Activated naive CD4-positive, alpha-beta T cell treated with anti-CD3 and anti-CD28 coated beads, Interleukin-2, amount 10 ng/mL, durations not matched to agents 7 days and 5 days (primary cell): ENCODE measurements at regions of chr17 and their contacts with region 1.

Region 1: DNA sequence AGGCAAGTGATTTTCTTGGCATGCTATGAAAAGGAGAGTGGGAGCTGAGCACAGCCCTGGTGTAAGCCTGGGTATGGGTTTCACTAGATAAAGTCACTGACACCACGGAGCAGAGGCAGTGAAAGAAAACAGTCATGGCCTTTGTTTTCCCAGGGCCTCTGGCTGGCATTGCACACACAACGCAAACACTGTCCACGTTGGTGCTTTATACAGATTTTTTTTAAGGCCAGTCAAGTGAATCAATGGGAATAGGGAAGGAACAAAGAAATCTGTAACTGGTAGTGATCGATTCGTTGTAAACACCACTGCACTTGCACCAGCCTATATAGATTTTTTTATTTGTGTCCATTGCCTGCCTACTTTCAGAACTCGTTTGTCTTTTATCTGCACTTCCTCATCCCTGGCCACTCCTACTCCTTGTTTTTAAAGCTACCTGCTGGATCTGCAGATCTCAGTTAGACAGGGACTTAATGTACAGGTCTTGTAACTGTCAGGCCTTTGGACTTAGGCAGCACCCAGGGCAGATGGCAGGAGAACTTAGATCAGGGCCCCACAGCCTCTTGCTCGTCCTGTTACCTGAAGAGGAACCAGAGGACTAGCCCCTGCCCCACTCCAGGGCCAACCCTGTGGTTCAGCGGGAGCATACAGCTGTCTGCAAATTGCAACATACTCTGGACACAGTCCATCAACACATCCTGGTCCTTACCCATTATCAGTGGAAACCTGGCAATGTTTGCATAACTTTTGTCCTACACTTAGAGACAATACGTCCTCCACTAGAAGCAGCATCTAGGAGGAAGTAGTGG is 10.6 kb upstream of the TMIGD1 start:
- DNase-seq: no peak
- H3K4me3 Mint-ChIP-seq: no peak overlapping the region
- H3K27ac Mint-ChIP-seq: no peak overlapping the region
- H3K4me1 Mint-ChIP-seq: peaks cover 5% of the 10 kb centered on the region
- H3K27me3 Mint-ChIP-seq: peaks cover 4% of the 10 kb centered on the region

Region 2: DNA sequence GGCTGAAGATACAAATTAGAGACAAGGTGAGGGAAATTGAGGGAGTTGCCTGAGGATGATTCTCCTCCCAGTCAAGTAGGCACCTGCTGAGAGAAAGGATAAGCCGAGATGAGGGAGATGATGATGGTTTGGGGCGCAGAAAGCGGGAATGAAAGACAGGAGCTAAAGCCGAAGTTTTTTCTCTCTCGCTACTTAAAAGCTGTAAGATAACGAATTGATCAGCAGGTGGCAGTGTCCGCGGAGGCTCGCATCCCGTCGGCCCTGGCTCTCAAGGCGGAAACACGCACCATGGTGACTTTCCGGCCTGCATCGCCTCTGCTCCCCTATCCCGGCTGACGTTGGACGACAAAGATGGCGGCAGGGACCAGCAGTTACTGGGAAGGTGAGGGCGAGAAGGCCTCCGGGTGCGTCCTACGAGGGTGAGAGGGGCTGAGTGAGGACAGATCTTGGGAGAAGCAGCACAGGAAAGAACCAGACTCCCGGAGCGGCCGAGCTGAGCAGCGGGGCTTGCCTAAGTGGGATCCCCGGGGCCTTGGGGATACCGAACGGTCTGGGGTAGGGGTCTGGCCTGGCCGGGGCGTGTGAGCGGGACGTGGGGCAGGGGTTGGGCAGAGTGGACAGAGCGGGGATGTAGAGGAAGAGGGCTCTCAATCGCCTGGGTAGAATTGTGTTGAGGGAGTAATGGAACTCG is 132.7 kb after region 1 on chr17 and contains the start of gene GOSR1:
- CTCF ChIA-PET with region 1: interaction called, 12 read pairs
- DNase-seq: peak; percentile 96
- H3K4me3 Mint-ChIP-seq: peak within 1 kb of the TSS; percentile 94
- H3K27ac Mint-ChIP-seq: peak within 1 kb of the TSS; percentile 93
- H3K4me1 Mint-ChIP-seq: peaks cover 38% of the 10 kb centered on the region
- H3K27me3 Mint-ChIP-seq: peaks cover 9% of the 10 kb centered on the region

Region 3: DNA sequence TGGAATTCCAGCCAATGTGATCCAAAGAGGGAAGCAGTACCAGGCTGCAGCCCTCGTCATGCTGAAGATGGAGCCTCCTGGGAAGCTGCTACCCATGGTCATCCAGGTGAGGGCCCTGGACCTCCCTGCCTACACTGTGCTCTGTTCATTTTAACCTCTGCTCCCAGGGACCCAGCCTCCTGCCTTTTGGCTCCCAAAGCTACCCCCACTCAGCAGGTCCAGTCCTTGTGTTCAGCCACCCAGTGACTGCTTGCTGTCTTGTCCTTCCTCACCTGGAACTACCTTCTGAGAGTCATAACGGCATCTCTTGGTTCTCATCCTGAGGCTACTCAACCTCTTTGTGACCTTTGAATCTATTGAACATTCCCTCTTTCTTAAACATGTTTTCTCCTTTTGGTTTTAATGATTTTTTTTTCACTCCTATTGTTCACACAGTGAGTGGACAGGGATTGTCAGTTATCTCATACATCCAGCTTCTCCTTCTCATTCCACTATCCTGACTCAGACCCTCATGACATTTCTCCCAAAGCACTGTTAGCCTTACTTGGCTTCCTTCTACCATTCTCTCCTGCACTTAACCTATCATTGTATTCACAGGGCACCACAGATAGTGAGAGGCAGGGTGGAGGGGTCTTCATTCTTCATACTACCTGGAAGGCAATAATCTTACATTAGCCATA is 186.0 kb after region 1 on chr17:
- CTCF ChIA-PET with region 1: no interaction called
- DNase-seq: no peak
- H3K4me3 Mint-ChIP-seq: no peak overlapping the region
- H3K27ac Mint-ChIP-seq: no peak overlapping the region
- H3K4me1 Mint-ChIP-seq: no peaks in the 10 kb centered on the region
- H3K27me3 Mint-ChIP-seq: no peaks in the 10 kb centered on the region

Region 4: DNA sequence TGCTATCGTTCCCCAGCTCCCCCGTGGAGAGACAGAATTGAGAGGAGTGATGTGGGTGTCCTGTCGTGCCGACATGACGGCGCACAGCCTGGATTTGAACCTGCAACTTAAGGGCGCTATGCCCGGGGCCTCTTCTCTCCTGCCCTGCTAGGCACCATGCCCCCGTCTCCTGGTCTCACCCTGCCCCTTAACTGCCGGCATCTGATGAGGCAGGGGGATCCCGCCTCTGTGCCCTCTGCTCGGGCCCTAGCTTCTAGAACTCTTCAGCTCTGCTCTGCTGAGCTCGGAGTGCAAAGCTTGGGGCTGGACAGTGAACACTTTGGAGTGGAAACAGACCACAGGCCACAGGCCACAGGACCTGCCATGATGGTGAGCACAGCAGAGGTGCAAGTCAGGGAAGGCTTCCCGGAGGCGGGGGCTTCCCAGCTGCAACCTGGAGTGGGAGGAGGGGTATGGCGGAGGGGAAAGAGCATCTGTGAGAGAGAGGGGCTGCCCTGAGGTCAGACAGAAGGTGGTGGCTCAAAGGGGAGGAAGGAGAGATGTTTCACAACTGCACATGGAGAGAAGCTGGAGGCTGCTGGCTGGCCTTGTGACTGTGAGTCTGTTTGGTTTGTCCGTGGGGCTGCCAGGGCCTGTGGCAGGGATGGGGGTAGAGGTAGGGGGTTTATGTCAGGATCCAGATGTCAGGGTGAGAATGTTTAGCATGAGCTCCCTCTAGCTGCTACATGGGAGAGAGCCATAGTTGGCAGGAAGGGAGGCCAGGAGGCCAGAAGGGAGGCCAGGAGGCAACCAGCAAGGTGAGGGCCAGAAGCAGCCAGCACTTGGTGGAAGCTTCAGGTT is 372.2 kb after region 1 on chr17:
- CTCF ChIA-PET with region 1: interaction called, 33 read pairs
- DNase-seq: no peak
- H3K4me3 Mint-ChIP-seq: no peak overlapping the region
- H3K27ac Mint-ChIP-seq: no peak overlapping the region
- H3K4me1 Mint-ChIP-seq: peaks cover 8% of the 10 kb centered on the region
- H3K27me3 Mint-ChIP-seq: peaks cover 22% of the 10 kb centered on the region